ENCODE measurements at regions of chr4 and their contacts with region 1.

Region 1: GRCh38 chr4:55931833-55932232 is 16.9 kb upstream of the CEP135 start:
- DNase-seq: no peak
- H3K4me3 Mint-ChIP-seq: no peak overlapping the region
- H3K27ac Mint-ChIP-seq: no peak overlapping the region
- H3K4me1 Mint-ChIP-seq: no peaks in the 10 kb centered on the region
- H3K27me3 Mint-ChIP-seq: peaks cover 2% of the 10 kb centered on the region

Region 2: DNA sequence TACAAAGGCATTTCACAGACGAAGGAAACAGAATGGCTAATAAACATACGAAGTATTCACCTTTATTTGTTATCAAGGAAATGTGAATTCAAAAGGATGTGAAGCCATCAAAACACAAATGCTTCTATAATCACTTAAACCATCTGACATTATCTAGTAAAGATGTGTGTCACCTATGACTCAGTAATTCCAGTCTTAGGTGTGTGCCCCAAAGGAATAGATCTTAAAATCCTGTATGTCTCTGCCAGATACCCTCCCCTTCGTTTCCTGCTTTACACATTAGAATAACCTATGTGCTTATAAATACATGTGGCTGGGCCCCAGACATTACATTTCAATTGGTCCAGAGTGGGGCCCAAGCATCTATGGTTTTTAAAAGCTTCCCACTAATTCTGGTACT is 24.8 kb before region 1 on chr4:
- intact Hi-C with region 1: loop called (anchors 1 kb)
- DNase-seq: no peak
- H3K4me3 Mint-ChIP-seq: no peak overlapping the region
- H3K27ac Mint-ChIP-seq: peak overlapping the region; percentile 21
- H3K4me1 Mint-ChIP-seq: peaks cover 15% of the 10 kb centered on the region
- H3K27me3 Mint-ChIP-seq: no peaks in the 10 kb centered on the region

Region 3: DNA sequence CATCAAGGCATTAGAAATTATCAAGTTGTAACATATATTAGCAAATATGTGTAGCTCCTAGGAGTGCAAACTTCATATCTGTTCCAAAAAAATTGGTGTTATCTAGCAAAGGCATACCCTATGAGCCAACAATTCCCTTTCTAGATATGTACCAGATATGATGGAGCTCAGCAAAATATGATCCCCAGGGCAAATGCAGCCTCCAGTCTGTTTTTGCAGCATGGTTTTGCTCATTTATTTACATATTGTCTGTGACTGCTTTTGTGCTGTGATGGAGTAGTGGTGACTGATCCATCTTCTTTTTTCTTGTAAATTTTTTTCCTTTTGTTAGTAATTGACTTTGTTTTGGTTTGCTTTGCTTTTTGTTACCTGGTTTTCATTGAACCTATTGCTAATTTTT is 57.9 kb after region 1 on chr4:
- intact Hi-C with region 1: no loop called
- DNase-seq: no peak
- H3K4me3 Mint-ChIP-seq: no peak overlapping the region
- H3K27ac Mint-ChIP-seq: peak overlapping the region; percentile 6
- H3K4me1 Mint-ChIP-seq: peaks cover 27% of the 10 kb centered on the region
- H3K27me3 Mint-ChIP-seq: no peaks in the 10 kb centered on the region